ENCODE measurements at regions of chr7 and their contacts with region 1.

Region 1: DNA sequence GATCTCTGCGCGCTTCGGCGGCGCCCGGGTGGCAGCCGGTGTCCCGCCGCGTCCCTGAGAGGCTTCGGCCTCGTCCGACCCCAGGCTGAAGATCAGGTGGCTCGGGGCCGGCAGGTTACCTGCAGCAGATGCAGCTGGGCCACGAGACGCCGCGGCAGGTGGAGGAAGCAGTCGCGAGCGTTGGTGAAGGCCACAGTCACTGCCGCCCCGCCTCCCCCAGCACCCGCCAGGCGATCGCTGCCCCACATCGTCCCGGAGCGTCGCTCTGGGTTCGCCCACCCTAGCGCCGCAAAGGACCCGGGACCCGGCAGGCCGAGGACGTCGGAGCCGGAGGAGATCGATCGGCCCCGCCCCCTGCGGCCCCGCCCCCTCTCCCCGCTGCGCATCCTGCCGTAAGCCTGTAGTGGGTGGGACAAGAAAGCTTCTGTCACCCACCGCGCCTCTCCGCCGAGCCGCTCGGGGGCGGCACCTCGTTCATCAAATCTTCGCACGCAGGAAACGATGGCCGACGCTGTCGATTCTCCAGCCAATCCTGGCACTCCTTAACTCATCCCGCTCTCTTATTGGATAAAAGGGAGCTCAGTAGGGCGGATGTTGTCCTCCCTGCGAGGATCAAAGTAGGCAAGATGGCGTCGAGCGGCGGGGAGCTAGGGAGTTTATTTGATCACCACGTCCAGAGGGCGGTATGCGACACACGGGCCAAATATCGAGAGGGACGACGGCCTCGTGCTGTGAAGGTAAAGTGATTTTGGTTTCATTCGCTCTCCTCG is at the starts of genes PEX1 and RBM48:
- DNase-seq: peak; percentile 85 to 99
- H3K4me3 ChIP-seq: peak within 1 kb of the TSS; percentile 87 to 100 (median 96)
- H3K27ac ChIP-seq: peak within 1 kb of the TSS; percentile 92
- H3K4me1 ChIP-seq: peaks cover 0 to 4% (median 3%) of the 10 kb centered on the region in 4 experiments; a peak in 4 of 7 replicates
- H3K27me3 ChIP-seq: no peaks in the 10 kb centered on the region
- CTCF ChIP-seq: peak; percentile 58 to 66 (median 61)
- EP300 ChIP-seq: no peak
- POLR2A ChIP-seq: peak; percentile 75 to 94
- RAD21 ChIP-seq: peak in 1 of 2 experiments; percentile 17; a peak in 1 of 4 replicates
- total RNA-seq, gene PEX1: 21.8 and 23.9 TPM in 2 replicates
- total RNA-seq, gene RBM48: 8.6 and 9.5 TPM in 2 replicates

Region 2: DNA sequence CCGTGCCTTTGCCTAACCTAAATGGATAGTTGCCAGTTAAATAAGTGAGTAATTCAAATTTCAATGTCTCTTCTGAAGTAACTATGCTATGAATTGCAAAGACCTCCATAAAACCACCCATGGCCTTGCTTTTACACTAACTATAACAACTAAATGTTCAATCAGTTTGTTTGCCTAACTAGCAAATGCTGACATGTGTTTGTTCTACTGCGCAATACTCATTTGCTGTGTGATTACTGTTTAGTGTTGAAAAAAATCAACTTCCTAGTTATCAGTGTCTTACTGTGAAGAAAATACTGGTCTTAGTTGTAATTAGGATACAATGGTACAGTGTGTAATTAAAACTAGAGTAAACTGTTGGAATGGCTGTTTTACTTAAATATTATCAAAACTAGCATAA is 128.4 kb before region 1 on chr7:
- CTCF ChIA-PET with region 1: no interaction called
- POLR2A ChIA-PET with region 1: no interaction called
- DNase-seq: no peak
- H3K4me3 ChIP-seq: no peak overlapping the region
- H3K27ac ChIP-seq: no peak overlapping the region
- H3K4me1 ChIP-seq: peaks cover 0 to 5% (median 0%) of the 10 kb centered on the region in 4 experiments; a peak in 1 of 7 replicates
- H3K27me3 ChIP-seq: peaks cover 0 to 1% (median 0%) of the 10 kb centered on the region in 4 experiments; a peak in 1 of 7 replicates
- CTCF ChIP-seq: no peak
- EP300 ChIP-seq: no peak
- POLR2A ChIP-seq: no peak
- RAD21 ChIP-seq: no peak

Region 3: DNA sequence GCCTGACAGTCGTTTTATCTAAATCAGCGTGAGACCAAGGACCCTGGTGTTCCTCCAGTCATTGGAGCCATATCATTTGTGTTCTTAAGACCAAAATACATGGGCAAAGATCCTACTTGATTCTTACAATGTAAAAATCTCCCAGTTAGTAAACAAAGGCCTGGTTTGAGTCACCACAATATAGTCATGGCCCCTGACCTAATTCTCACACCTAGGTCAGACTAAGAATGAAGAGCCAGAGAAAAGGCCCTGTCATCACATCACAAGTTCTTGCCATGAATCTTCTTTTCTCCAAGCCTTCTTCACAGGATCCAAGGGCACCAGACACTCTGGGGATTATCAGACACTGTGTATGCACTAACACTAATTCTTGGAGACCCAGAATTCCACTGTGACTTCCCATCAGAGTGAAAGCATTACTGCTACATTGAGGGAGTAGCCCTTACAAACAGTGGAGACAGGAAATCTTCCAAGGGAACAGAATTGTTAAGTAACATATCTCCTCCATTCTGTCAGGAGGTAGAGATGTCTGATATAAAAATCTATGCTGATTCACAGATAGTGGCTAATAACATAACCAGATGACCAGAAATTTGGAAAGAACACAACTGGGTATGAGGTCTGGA is 43.0 kb before region 1 on chr7:
- CTCF ChIA-PET with region 1: no interaction called
- POLR2A ChIA-PET with region 1: no interaction called
- DNase-seq: no peak
- H3K4me3 ChIP-seq: no peak overlapping the region
- H3K27ac ChIP-seq: no peak overlapping the region
- H3K4me1 ChIP-seq: no peaks in the 10 kb centered on the region
- H3K27me3 ChIP-seq: no peaks in the 10 kb centered on the region
- CTCF ChIP-seq: no peak
- EP300 ChIP-seq: no peak
- POLR2A ChIP-seq: no peak
- RAD21 ChIP-seq: no peak

Region 4: GRCh38 chr7:92517631-92518030 is 10.7 kb before region 1 on chr7:
- CTCF ChIA-PET with region 1: interaction called, 12 read pairs
- POLR2A ChIA-PET with region 1: interaction called, 3 read pairs
- DNase-seq: no peak
- H3K4me3 ChIP-seq: no peak overlapping the region
- H3K27ac ChIP-seq: no peak overlapping the region
- H3K4me1 ChIP-seq: no peaks in the 10 kb centered on the region
- H3K27me3 ChIP-seq: no peaks in the 10 kb centered on the region
- CTCF ChIP-seq: no peak
- EP300 ChIP-seq: no peak
- POLR2A ChIP-seq: no peak
- RAD21 ChIP-seq: no peak

Region 5: DNA sequence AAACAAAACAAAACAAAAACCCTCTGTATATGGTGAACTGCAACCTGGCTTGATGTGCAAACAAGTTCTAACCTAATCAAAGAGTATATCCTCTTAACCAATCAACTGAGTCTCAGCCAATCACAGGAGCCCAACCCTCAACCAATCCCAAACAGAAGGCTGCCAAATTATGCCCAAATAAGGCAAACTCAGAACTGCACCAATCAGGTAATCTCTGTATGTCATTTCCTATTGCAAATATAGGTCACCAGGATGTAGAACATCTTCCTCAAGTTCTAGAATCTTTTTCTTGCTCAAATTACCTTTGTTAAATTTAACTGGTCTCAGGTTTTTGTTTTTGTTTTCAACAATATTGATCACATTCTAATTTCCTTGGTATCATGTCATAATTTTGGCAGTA is 56.6 kb after region 1 on chr7:
- CTCF ChIA-PET with region 1: interaction called, 3 read pairs
- POLR2A ChIA-PET with region 1: interaction called, 12 read pairs
- DNase-seq: no peak
- H3K4me3 ChIP-seq: no peak overlapping the region
- H3K27ac ChIP-seq: peak overlapping the region; percentile 39; the same call in 1 of the 2 replicates
- H3K4me1 ChIP-seq: peaks cover 0 to 5% (median 0%) of the 10 kb centered on the region in 4 experiments; a peak in 3 of 7 replicates
- H3K27me3 ChIP-seq: no peaks in the 10 kb centered on the region
- CTCF ChIP-seq: no peak
- EP300 ChIP-seq: no peak
- POLR2A ChIP-seq: no peak
- RAD21 ChIP-seq: no peak

Measured in H1 (cell line).